MCF 10A (cell line): ENCODE measurements at regions of chr12 and their contacts with region 1.

Region 1: GRCh38 chr12:49945394-49946080 is 5.0 kb upstream of the AQP2 start:
- DNase-seq: peak; percentile 77
- H3K4me3 Mint-ChIP-seq: no peak overlapping the region
- H3K27ac Mint-ChIP-seq: peak overlapping the region; percentile 47
- H3K4me1 Mint-ChIP-seq: peaks cover 19% of the 10 kb centered on the region
- H3K27me3 Mint-ChIP-seq: no peaks in the 10 kb centered on the region
- CTCF ChIP-seq: peak; percentile 83

Region 2: DNA sequence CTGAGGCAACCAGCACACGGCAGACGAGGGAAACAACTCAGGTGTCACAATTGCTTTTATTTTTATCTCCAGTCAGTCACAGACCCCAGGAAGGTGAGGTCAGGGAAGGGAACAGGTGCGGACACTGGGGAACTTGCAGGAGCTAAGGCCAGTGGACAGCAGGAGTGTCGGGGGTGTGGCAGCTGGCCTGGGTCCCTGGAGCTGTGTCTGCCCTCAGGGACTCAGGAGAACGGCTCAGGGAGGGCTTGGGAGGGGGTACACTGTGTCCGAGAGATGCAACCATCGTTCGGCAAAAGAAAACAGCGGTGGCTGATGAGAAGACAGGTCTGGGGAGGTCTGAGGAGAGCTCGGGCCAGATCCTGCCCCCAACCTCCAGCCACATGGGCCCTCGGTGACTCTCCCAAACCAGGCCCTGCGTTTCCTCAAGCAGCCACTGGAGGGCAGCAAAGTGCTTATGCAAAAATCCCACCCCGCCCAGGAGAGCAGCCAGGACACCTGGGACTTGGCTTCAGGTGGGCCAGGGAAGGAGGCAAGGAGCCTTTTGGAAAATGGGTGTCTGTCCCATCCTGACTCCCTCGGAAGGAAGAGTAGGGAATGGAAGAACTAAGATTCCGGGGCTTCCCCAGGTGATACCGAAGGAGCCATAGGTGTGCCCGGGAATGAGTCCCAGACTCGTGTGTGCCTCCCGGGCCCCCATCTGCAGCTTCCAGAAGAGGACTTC is 78.5 kb before region 1 on chr12:
- CTCF ChIA-PET with region 1: interaction called, 26 read pairs
- POLR2A ChIA-PET with region 1: interaction called, 3 read pairs
- intact Hi-C with region 1: no loop called
- DNase-seq: peak; percentile 77
- H3K4me3 Mint-ChIP-seq: no peak overlapping the region
- H3K27ac Mint-ChIP-seq: no peak overlapping the region
- H3K4me1 Mint-ChIP-seq: peaks cover 10% of the 10 kb centered on the region
- H3K27me3 Mint-ChIP-seq: peaks cover 14% of the 10 kb centered on the region
- CTCF ChIP-seq: peak; percentile 95

Region 3: DNA sequence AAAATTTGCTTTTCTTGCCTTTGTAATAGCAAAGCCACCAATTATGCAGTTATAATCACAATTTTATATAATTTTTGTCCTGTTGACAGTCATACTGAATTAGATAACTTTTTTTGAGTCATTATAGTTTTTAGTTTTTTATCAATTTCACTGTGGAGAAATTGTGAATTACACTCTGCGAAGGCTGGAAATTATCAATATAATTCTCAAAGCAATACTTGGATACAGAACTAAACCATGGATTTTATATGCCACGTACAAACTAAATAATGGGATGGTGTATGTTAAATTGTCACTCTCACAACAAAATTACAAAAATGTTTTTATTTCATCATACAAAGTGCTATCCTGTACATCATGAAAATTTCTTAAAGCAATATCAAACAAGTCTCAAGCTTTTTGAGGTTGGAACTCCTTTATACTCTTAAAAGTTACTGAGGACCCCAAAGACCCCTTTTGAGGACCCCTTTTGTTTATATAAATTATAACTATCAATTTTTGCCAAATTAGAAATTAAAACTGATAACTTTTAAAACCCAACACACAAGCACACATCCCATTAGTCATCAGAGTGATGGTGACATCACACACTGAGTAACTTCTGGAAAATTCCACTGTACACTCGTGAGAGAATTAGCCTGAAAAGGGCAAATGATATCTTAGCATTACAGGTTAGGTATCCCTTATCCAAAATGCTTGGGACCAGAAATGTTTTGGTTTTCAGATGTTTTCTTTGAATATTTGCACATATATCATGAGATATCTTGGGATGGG is 14.8 kb before region 1 on chr12:
- CTCF ChIA-PET with region 1: interaction called, 17 read pairs
- POLR2A ChIA-PET with region 1: no interaction called
- intact Hi-C with region 1: no loop called
- DNase-seq: peak; percentile 55
- H3K4me3 Mint-ChIP-seq: no peak overlapping the region
- H3K27ac Mint-ChIP-seq: no peak overlapping the region
- H3K4me1 Mint-ChIP-seq: peaks cover 10% of the 10 kb centered on the region
- H3K27me3 Mint-ChIP-seq: no peaks in the 10 kb centered on the region
- CTCF ChIP-seq: no peak

Region 4: GRCh38 chr12:49959570-49960465 is 14.3 kb after region 1 on chr12:
- CTCF ChIA-PET with region 1: interaction called, 16 read pairs
- POLR2A ChIA-PET with region 1: no interaction called
- intact Hi-C with region 1: no loop called
- DNase-seq: peak; percentile 86
- H3K4me3 Mint-ChIP-seq: no peak overlapping the region
- H3K27ac Mint-ChIP-seq: peak overlapping the region; percentile 5
- H3K4me1 Mint-ChIP-seq: peaks cover 28% of the 10 kb centered on the region
- H3K27me3 Mint-ChIP-seq: no peaks in the 10 kb centered on the region
- CTCF ChIP-seq: no peak